Sciatic nerve (tissue), 2 donors: ENCODE measurements at regions of chr9 and their contacts with region 1.

Region 1: GRCh38 chr9:97598461-97599288 is 34.5 kb downstream of the TSTD2 start:
- DNase-seq: peak; percentile 83
- ATAC-seq: peak; percentile 86

Region 2: GRCh38 chr9:97468658-97469448 is 129.8 kb before region 1 on chr9:
- intact Hi-C with region 1: loop called (anchors 2 kb)
- DNase-seq: peak; percentile 81
- ATAC-seq: peak; percentile 98